ENCODE measurements at regions of chr2 and their contacts with region 1.

Region 1: GRCh38 chr2:59083075-59083828 is 842.1 kb upstream of the FANCL start:
- DNase-seq: no peak
- ATAC-seq: no peak
- H3K4me3 ChIP-seq: no peak overlapping the region
- H3K27ac ChIP-seq: no peak overlapping the region
- H3K4me1 ChIP-seq: no peaks in the 10 kb centered on the region
- H3K27me3 ChIP-seq: no peaks in the 10 kb centered on the region
- CTCF ChIP-seq: no peak
- EP300 ChIP-seq: no peak
- POLR2A ChIP-seq: no peak
- RAD21 ChIP-seq: peak in 1 of 2 experiments; percentile 23; a peak in 2 of 4 replicates

Region 2: DNA sequence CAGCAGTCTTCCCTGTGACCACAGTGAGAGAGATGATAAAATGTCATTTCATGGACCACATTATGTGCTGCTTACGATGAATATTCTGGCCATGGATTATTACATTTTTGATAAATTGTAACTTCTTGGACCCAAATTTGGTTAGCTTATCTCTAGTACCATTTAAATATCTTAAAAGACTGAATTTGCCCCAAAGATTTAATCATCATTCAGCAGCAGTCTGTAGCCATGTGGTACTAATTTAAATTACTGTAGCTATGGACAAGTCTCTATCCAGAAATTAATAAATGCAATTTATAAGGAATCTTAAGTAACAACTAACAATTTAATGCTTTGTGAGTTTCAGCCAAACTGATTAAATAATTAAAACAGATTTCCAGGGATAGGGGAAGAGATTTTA is 197.2 kb before region 1 on chr2:
- CTCF ChIA-PET with region 1: no interaction called
- POLR2A ChIA-PET with region 1: no interaction called
- in situ Hi-C with region 1: no loop called
- intact Hi-C with region 1: no loop called
- DNase-seq: no peak
- ATAC-seq: no peak
- H3K4me3 ChIP-seq: no peak overlapping the region
- H3K27ac ChIP-seq: no peak overlapping the region
- H3K4me1 ChIP-seq: no peaks in the 10 kb centered on the region
- H3K27me3 ChIP-seq: no peaks in the 10 kb centered on the region
- CTCF ChIP-seq: no peak
- EP300 ChIP-seq: no peak
- POLR2A ChIP-seq: no peak
- RAD21 ChIP-seq: no peak

Region 3: DNA sequence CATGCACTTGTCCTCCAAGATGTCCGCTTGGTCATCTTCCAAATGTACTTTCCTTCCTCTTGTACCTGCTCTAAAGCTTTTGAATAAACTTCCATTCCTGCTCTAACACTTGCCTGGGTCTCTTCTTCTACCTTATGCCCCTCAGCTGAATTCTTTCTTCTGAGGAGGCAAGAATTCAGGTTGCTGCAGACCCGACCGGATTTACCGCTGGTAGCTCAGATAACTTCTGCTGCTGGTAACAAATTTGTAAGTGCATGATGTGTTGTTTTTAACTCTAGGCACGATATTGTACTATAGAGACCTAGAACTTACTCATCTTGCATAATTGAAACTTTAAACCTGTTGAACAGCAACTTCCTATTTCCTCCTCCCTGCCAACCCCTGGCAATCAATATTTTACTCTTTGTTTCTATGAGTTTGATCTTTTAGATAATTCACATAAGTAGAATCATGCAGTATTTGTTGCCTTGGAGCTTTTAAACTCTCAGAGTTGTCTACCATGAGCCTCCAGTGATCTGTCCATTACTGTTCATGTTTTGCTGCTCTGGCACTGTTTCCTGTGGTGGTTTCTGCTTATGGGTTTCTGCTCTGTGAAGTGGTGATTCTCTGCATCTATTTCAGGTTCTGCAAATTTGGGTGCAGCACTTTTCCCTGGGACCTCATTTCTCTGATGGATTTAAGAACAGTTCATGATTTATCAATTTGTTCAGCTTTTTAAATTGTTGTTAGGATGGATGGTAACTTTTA is 65.8 kb after region 1 on chr2:
- CTCF ChIA-PET with region 1: no interaction called
- POLR2A ChIA-PET with region 1: no interaction called
- in situ Hi-C with region 1: no loop called
- intact Hi-C with region 1: loop called (anchors 10 kb)
- DNase-seq: no peak
- ATAC-seq: no peak
- H3K4me3 ChIP-seq: no peak overlapping the region
- H3K27ac ChIP-seq: no peak overlapping the region
- H3K4me1 ChIP-seq: no peaks in the 10 kb centered on the region
- H3K27me3 ChIP-seq: no peaks in the 10 kb centered on the region
- CTCF ChIP-seq: no peak
- EP300 ChIP-seq: no peak
- POLR2A ChIP-seq: no peak
- RAD21 ChIP-seq: no peak

Measured in K562 (cell line).